Caco-2 (cell line): ENCODE measurements at regions of chr6 and their contacts with region 1.

Region 1: DNA sequence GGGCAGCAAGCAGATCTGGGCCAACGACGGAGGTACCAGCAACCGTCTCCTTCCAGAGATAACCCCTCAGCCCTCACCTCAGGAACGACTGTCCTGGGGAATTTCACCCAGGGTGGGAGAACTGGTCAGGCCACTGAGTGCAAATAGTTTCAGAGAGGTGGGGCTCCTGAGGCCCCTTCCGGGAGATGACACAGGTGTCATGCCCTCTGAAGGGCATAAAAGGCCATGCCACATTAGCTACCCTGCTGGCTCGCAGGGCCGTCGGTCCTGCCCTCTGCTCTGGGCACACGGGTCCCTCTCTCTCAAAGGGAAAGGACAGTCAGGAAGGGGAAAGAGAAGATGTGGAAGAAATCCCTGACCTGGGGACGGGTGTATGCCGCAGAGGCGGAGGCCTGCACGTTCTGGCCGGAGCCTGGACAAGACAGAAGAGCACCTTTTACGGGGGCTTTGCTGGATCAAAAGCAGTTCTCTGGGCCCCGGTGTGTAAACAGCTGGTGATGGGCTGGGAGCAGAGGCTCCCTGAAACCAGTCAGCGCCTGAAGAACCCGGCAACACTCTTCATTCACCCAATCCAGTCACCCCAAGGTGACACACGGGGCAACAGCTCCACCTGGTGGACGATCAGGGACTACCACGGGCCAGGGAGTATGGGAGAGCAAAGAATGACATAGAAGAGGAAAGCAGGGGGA is 6.4 kb upstream of the TAF8 start:
- DNase-seq: peak; percentile 88 to 93
- H3K4me3 ChIP-seq: 0 out of 2 replicates have a peak overlapping the region, but pooled peaks have one; percentile 9
- H3K4me3 Mint-ChIP-seq: peak overlapping the region; percentile 76
- H3K27ac Mint-ChIP-seq: peak overlapping the region; percentile 95
- H3K4me1 ChIP-seq: peaks cover 17% of the 10 kb centered on the region
- H3K4me1 Mint-ChIP-seq: peaks cover 9% of the 10 kb centered on the region
- H3K27me3 ChIP-seq: no peaks in the 10 kb centered on the region
- H3K27me3 Mint-ChIP-seq: no peaks in the 10 kb centered on the region
- CTCF ChIP-seq: peak; percentile 90 to 92

Region 2: DNA sequence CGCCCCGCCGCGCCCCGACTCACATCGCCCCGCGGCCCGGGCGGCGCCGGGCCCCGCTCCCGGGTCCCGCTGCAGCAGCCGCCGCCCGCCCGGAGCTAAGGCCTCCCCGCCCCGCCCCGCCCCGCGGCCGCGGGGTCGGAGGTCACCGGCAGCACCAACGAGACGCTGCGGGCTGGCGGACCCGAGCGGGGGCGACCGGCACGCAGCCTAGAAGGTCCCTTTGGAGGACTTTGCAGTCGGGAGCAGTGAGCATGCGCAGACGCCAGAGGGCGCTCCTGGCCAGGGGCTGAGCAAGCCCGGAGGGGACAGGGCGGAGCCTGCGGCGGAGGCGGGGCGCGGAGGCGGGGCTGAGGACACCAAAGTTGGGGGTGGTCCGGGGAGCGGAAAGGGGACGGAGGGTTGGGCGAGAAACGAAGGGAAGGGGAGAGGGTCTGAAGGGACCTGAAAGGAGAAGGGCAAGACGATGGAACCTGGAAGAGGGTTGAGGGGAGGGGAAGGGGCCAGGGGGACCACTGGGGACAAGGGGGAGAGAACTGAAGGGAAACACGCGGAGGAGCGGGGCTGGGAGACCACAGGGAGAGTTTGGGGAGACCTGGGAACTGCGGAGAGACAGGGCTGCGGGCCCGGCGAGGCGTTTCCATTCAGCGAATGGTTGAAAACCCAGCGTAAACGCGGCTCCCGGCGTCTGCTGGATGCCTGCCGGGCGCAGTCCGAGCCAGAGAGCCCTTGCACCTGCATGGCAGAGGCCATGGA is 264.0 kb before region 1 on chr6 and contains the start of gene FRS3:
- CTCF ChIA-PET with region 1: interaction called, 7 read pairs
- POLR2A ChIA-PET with region 1: no interaction called
- intact Hi-C with region 1: loop called (anchors 1 kb)
- DNase-seq: peak; percentile 96 to 99
- H3K4me3 ChIP-seq: peak within 1 kb of the TSS; percentile 82
- H3K4me3 Mint-ChIP-seq: peak within 1 kb of the TSS; percentile 88
- H3K27ac Mint-ChIP-seq: peak within 1 kb of the TSS; percentile 74
- H3K4me1 ChIP-seq: 0 out of 2 replicates have a peak, but pooled peaks cover 3% of the 10 kb centered on the region
- H3K4me1 Mint-ChIP-seq: peaks cover 18% of the 10 kb centered on the region
- H3K27me3 ChIP-seq: no peaks in the 10 kb centered on the region
- H3K27me3 Mint-ChIP-seq: no peaks in the 10 kb centered on the region
- CTCF ChIP-seq: peak; percentile 85 to 96
- total RNA-seq, gene FRS3: 4.1 and 4.3 TPM in 2 replicates

Region 3: DNA sequence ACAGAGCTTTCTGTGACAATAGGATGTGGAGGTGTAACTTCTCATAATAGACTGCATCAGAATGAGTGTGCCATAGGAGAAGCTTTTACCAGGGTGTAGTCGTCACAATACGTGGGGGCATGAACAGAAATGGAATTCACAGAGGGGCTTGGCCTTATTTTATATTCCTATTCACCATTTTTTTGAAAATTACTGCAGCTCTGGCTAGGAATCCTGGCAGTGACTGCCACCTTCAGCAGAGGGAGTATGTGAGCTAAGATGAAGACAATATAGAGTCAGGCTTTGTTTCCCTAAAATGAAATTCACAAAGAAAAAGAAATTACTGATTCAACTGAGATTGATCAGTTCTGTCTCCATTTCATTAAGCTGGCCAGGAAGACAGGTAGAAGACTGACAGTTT is 242.6 kb before region 1 on chr6:
- CTCF ChIA-PET with region 1: interaction called, 6 read pairs
- POLR2A ChIA-PET with region 1: no interaction called
- intact Hi-C with region 1: loop called (anchors 1 kb)
- DNase-seq: peak in 1 of 2 experiments; percentile 31
- H3K4me3 ChIP-seq: no peak overlapping the region
- H3K4me3 Mint-ChIP-seq: no peak overlapping the region
- H3K27ac Mint-ChIP-seq: no peak overlapping the region
- H3K4me1 ChIP-seq: no peaks in the 10 kb centered on the region
- H3K4me1 Mint-ChIP-seq: no peaks in the 10 kb centered on the region
- H3K27me3 ChIP-seq: no peaks in the 10 kb centered on the region
- H3K27me3 Mint-ChIP-seq: no peaks in the 10 kb centered on the region
- CTCF ChIP-seq: peak; percentile 37 to 52

Region 4: DNA sequence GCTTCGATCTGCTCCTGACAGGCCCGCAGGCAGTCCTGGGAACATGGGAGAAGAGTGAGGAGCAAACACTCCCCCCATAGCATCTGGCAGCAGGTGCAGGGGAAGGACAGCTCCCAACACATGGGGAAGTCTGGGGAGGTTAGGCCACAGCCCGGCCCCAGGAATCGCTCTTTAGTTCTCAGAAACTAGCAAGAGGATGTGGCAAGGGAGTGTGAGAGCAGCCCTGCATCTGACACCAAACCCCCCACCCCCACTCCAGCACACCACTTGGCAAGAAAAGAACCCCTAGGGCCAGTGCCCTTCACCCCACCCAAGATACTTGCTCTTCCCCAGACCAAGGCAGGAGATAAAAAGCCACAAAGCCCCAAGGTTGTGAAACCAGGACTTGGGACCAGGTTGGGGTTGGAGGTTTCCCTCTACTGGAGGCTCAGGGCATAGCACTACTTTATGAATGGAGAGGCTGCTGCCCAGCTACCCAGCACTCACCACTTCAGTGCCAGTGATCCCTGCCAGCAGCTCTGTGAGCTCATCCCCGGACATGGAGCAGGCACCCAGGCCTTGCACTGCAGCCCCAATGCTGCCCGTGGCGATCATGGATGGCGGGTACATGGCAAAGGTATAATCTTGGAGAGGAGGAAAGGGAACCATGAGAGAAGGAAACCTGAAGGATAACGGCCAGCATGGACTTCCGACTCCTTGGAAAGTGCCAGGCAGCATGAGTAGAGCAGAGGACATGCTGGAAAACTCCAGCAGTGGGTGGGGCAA is 107.7 kb before region 1 on chr6:
- CTCF ChIA-PET with region 1: interaction called, 18 read pairs
- POLR2A ChIA-PET with region 1: interaction called, 3 read pairs
- intact Hi-C with region 1: loop called (anchors 1 kb)
- DNase-seq: peak; percentile 68 to 80
- H3K4me3 ChIP-seq: no peak overlapping the region
- H3K4me3 Mint-ChIP-seq: no peak overlapping the region
- H3K27ac Mint-ChIP-seq: peak overlapping the region; percentile 20
- H3K4me1 ChIP-seq: peaks cover 33% of the 10 kb centered on the region
- H3K4me1 Mint-ChIP-seq: peaks cover 17% of the 10 kb centered on the region
- H3K27me3 ChIP-seq: no peaks in the 10 kb centered on the region
- H3K27me3 Mint-ChIP-seq: no peaks in the 10 kb centered on the region
- CTCF ChIP-seq: peak; percentile 83 to 91

Region 5: DNA sequence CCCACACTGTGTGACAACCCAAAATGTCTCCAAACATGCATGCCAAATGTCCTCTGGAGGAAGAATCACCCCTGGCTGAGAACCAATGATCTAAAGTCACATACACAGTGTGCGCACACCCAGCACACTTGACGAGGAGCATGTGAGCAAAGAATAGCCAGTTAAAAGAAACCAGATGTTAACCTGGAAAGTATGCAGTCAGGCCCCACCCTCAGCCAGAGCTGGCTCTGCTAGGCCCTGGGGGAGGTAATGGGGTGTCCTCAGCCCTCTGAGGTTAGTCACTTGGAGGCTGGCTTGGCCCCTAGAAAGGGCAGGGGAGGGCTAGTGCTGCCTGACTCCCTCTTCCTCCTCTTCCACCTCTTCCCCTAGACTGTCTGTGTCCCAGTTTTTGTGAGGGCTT is 114.1 kb after region 1 on chr6:
- CTCF ChIA-PET with region 1: no interaction called
- POLR2A ChIA-PET with region 1: no interaction called
- intact Hi-C with region 1: no loop called
- DNase-seq: no peak
- H3K4me3 ChIP-seq: no peak overlapping the region
- H3K4me3 Mint-ChIP-seq: no peak overlapping the region
- H3K27ac Mint-ChIP-seq: no peak overlapping the region
- H3K4me1 ChIP-seq: 0 out of 2 replicates have a peak, but pooled peaks cover 6% of the 10 kb centered on the region
- H3K4me1 Mint-ChIP-seq: no peaks in the 10 kb centered on the region
- H3K27me3 ChIP-seq: no peaks in the 10 kb centered on the region
- H3K27me3 Mint-ChIP-seq: no peaks in the 10 kb centered on the region
- CTCF ChIP-seq: no peak